ENCODE measurements at regions of chr15 and their contacts with region 1.

Region 1: DNA sequence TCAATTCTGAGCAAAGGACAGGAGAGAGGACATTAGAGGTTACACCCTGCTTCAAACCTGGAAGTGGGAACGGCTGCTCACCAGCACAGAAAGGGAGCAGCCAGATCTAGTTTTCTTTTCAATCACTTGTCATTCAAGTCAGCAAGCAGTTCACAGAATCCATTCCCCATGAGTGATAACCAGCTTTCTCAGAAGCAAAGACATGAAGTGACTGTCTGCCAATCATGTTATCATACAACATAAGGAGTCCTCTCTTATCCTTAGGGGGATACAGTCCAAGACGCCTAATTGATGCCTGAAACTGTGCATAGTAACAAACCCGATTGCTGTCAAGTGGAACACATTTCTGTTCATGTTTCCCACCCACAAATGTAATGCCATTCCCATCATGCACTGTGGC is 54.7 kb downstream of the FAM98B start:
- DNase-seq: no peak
- H3K4me3 Mint-ChIP-seq: no peak overlapping the region
- H3K27ac Mint-ChIP-seq: peak overlapping the region; percentile 78
- H3K4me1 Mint-ChIP-seq: peaks cover 42% of the 10 kb centered on the region
- H3K27me3 Mint-ChIP-seq: no peaks in the 10 kb centered on the region

Region 2: GRCh38 chr15:38531509-38531908 is 22.9 kb after region 1 on chr15:
- intact Hi-C with region 1: loop called (anchors 2 kb)
- DNase-seq: no peak
- H3K4me3 Mint-ChIP-seq: peak overlapping the region; percentile 1
- H3K27ac Mint-ChIP-seq: peak overlapping the region; percentile 65
- H3K4me1 Mint-ChIP-seq: peaks cover 80% of the 10 kb centered on the region
- H3K27me3 Mint-ChIP-seq: no peaks in the 10 kb centered on the region

Region 3: DNA sequence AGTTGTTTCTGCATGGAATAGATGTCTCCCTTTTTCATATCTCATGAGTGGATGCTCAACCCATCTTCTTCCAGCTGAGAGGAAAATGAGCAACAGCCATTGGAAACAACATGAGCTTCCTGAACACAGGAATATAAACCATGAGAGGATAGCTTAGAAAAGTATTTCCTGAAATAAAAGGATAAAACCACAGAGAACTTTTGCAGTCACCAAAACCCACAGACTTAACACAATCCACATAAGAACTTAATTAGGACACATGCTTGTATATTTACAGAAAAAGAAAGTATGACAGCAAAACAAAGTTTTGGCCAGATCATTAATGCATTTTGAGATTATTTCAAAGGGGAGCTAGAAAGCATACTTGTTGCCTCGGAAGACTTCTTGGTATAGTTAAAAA is 236.5 kb after region 1 on chr15:
- intact Hi-C with region 1: no loop called
- DNase-seq: no peak
- H3K4me3 Mint-ChIP-seq: no peak overlapping the region
- H3K27ac Mint-ChIP-seq: no peak overlapping the region
- H3K4me1 Mint-ChIP-seq: peaks cover 2% of the 10 kb centered on the region
- H3K27me3 Mint-ChIP-seq: peaks cover 17% of the 10 kb centered on the region